ENCODE measurements at regions of chr16 and their contacts with region 1.

Region 1: GRCh38 chr16:88700636-88701482 is 5.3 kb downstream of the RNF166 start:
- DNase-seq: peak; percentile 82 to 97 (median 94)
- ATAC-seq: peak; percentile 68 to 72
- H3K4me3 Mint-ChIP-seq: peak overlapping the region; percentile 93 to 99 (median 96)
- H3K27ac Mint-ChIP-seq: peak overlapping the region; percentile 88 to 100 (median 96)
- H3K4me1 Mint-ChIP-seq: peaks cover 28 to 72% (median 63%) of the 10 kb centered on the region in 4 donors
- H3K27me3 Mint-ChIP-seq: no peaks in the 10 kb centered on the region

Region 2: GRCh38 chr16:88569985-88570690 is 130.7 kb before region 1 on chr16 and contains the start of gene ZC3H18:
- POLR2A ChIA-PET with region 1: interaction called, 27 read pairs
- DNase-seq: peak; percentile 88 to 100 (median 96)
- ATAC-seq: peak; percentile 86 to 87
- H3K4me3 Mint-ChIP-seq: peak within 1 kb of the TSS; percentile 81 to 94 (median 88)
- H3K27ac Mint-ChIP-seq: peak within 1 kb of the TSS; percentile 78 to 95 (median 92)
- H3K4me1 Mint-ChIP-seq: peaks cover 2 to 47% (median 32%) of the 10 kb centered on the region in 4 donors
- H3K27me3 Mint-ChIP-seq: no peaks in the 10 kb centered on the region
- polyA plus RNA-seq, gene ZC3H18: 7.3 to 25.1 (median 15.9) TPM

Region 3: DNA sequence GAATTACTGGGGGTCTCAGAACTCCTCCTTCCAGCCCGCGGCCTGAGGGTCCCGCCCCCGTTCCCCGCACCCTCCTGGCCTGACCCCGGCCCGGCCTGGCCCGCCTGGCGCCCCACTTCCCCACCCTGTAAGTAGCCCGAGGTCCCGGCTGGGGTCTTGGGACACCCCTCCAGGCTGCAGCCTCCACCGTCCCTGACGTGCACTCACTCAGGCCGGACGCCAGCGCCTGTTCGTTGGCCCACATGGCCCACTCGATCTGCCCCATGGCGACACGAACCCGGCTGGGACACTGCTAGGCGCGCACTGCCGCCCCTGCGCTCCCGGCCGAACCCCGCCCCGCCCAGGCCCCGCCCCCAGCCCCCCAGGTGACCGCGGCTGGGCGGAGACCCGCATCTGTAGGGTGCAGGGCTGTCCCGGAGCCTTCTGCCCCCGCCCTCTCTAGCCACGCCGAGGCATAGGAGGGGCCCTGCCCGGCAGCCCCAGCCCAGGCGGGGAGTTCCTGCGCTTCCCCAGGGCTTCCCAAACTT is 50.0 kb before region 1 on chr16 and contains the start of gene CYBA:
- POLR2A ChIA-PET with region 1: interaction called, 31 read pairs
- DNase-seq: peak; percentile 71 to 89 (median 80)
- ATAC-seq: peak; percentile 88
- H3K4me3 Mint-ChIP-seq: peak within 1 kb of the TSS; percentile 82 to 96 (median 90)
- H3K27ac Mint-ChIP-seq: peak within 1 kb of the TSS; percentile 82 to 96 (median 93)
- H3K4me1 Mint-ChIP-seq: peaks cover 8 to 42% (median 27%) of the 10 kb centered on the region in 4 donors
- H3K27me3 Mint-ChIP-seq: no peaks in the 10 kb centered on the region
- polyA plus RNA-seq, gene CYBA: 625 to 787 (median 649) TPM

Region 4: GRCh38 chr16:88686439-88687253 is 14.2 kb before region 1 on chr16 and contains the start of gene SNAI3:
- POLR2A ChIA-PET with region 1: interaction called, 100 read pairs
- DNase-seq: peak; percentile 59 to 87 (median 77)
- ATAC-seq: peak; percentile 74
- H3K4me3 Mint-ChIP-seq: peak within 1 kb of the TSS; percentile 75 to 90 (median 82)
- H3K27ac Mint-ChIP-seq: peak within 1 kb of the TSS in 9 of 10 donors; percentile 37 to 89 (median 73)
- H3K4me1 Mint-ChIP-seq: peaks cover 12 to 64% (median 45%) of the 10 kb centered on the region in 4 donors
- H3K27me3 Mint-ChIP-seq: no peaks in the 10 kb centered on the region
- polyA plus RNA-seq, gene SNAI3: 3.3 to 6.1 (median 5.3) TPM

Region 5: DNA sequence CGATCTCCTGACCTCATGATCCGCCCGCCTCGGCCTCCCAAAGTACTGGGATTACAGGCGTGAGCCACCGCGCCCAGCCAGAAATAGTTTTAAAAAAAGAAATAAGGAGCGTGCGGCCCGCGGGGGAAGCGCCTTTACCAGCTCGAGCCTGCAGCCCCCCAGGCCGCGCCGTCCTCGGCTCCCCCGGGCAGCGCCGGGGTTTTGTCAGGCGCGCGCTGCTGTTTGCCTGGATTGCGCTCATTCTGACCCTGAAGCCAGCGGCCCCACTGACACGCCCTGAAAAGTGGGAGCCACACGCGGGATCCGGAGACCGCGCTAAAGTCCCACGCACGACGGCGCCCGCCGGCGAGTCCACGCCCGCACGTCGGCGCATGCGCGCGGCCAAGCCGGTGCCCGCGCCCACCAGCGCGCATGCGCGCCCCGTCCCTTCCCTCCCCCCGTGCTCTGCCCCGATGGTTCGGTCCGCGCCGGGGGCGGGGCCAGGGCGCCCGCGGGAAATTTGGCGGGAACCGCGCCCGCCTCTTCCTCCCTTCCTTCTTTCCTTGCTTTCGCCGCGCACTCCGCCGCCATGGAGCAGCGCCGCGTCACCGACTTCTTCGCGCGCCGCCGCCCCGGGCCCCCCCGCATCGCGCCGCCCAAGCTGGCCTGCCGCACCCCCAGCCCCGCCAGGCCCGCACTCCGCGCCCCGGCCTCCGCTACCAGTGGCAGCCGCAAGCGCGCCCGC is 102.6 kb after region 1 on chr16 and contains the start of gene CDT1:
- POLR2A ChIA-PET with region 1: interaction called, 10 read pairs
- DNase-seq: peak; percentile 65 to 88 (median 84)
- ATAC-seq: peak; percentile 54 to 58
- H3K4me3 Mint-ChIP-seq: peak within 1 kb of the TSS; percentile 78 to 91 (median 86)
- H3K27ac Mint-ChIP-seq: peak within 1 kb of the TSS; percentile 63 to 93 (median 86)
- H3K4me1 Mint-ChIP-seq: peaks cover 6 to 31% (median 18%) of the 10 kb centered on the region in 4 donors
- H3K27me3 Mint-ChIP-seq: no peaks in the 10 kb centered on the region
- polyA plus RNA-seq, gene CDT1: 0.13 to 0.46 (median 0.26) TPM

Measured in naive thymus-derived CD8-positive, alpha-beta T cell (primary cell).